Activated B cell treated with CpG ODN at 0.5 μM for 24 hours (primary cell): ENCODE measurements at regions of chr5 and their contacts with region 1.

Region 1: DNA sequence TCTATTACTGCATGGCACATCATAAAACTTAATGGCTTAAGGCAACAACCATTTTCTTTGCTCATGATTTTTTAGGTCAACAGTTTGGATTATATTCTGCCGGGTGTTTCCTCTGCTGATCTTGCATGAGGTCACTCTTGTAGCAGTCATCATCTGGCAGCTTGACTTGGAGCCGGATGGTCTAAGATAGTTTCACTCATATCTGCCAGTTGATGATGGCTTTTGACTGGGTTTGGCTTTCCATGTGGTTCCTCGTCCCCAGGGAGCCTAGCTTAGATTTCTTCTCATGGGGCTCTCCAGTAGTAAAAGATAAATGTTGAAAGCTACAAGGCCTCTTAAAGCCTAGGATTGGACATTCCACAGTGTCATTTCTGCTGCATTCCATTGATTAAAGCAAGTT is 27.4 kb downstream of the LNPEP start:
- DNase-seq: no peak
- ATAC-seq: peak; percentile 59
- H3K4me3 Mint-ChIP-seq: no peak overlapping the region
- H3K27ac Mint-ChIP-seq: peak overlapping the region; percentile 90
- H3K4me1 Mint-ChIP-seq: peaks cover 84% of the 10 kb centered on the region
- H3K27me3 Mint-ChIP-seq: no peaks in the 10 kb centered on the region
- CTCF ChIP-seq: no peak

Region 2: DNA sequence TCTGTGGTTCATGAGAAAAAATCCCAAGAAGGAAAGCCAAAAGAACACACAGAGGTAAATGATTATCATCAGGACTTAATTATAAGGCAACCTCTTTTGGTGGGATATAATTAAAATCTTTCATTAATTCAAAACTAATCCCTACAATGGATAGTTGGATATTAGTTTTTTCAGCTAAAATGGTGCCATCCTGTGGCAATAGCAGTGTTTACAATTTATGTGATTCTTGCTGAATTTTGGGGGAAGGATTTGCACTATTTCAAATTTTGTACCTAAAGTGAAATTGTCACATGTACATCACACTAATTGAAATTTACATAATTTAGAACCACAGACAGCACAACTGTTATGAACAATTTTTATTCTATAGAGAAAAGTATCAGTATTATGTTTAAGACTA is 234.1 kb before region 1 on chr5:
- CTCF ChIA-PET with region 1: no interaction called
- POLR2A ChIA-PET with region 1: no interaction called
- intact Hi-C with region 1: no loop called
- DNase-seq: no peak
- ATAC-seq: no peak
- H3K4me3 Mint-ChIP-seq: no peak overlapping the region
- H3K27ac Mint-ChIP-seq: no peak overlapping the region
- H3K4me1 Mint-ChIP-seq: peaks cover 3% of the 10 kb centered on the region
- H3K27me3 Mint-ChIP-seq: no peaks in the 10 kb centered on the region
- CTCF ChIP-seq: no peak

Region 3: DNA sequence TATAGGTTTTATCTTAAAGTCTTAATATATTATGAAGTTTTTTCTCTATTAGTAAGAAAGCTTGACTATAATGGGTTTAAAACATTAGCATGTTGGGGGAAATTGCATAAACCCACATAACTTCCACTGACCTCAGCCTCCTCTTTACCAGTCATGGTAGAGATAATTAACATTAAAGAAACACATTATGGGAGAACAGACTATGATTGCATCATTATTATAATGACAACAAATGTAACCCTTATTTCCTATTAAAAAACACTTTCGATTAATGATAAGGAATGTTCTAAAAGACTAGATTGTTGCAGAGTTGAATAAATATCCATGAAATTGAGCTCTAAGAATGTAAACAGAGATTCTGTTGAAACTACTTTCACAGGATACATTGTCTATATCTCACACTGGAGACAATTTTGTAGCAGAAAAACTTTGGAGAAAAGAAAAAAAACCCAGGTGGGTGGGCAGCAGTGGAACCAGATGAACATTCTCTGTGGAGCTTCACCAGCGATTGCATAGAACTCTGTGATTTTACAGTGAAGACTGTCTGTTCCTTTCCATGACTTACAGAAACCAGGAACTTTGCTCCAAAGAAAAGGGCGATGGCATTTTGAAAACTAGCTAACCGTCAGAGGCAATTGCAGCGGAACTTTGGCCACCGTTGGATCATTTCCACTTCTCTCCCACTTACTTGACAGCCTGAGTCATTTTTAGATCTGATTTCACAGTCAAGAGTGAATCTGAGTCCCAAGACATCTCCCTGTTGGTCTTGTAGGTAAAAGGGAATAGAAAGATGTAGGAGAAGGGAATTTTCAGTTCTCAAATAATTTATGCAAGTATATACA is 108.0 kb before region 1 on chr5:
- CTCF ChIA-PET with region 1: no interaction called
- POLR2A ChIA-PET with region 1: no interaction called
- intact Hi-C with region 1: no loop called
- DNase-seq: no peak
- ATAC-seq: no peak
- H3K4me3 Mint-ChIP-seq: no peak overlapping the region
- H3K27ac Mint-ChIP-seq: no peak overlapping the region
- H3K4me1 Mint-ChIP-seq: no peaks in the 10 kb centered on the region
- H3K27me3 Mint-ChIP-seq: no peaks in the 10 kb centered on the region
- CTCF ChIP-seq: no peak

Region 4: GRCh38 chr5:96973532-96974401 is 10.5 kb after region 1 on chr5:
- CTCF ChIA-PET with region 1: no interaction called
- POLR2A ChIA-PET with region 1: interaction called, 3 read pairs
- intact Hi-C with region 1: loop called (anchors 1 kb)
- DNase-seq: no peak
- ATAC-seq: peak; percentile 40
- H3K4me3 Mint-ChIP-seq: peak overlapping the region; percentile 29
- H3K27ac Mint-ChIP-seq: peak overlapping the region; percentile 7
- H3K4me1 Mint-ChIP-seq: peaks cover 72% of the 10 kb centered on the region
- H3K27me3 Mint-ChIP-seq: no peaks in the 10 kb centered on the region
- CTCF ChIP-seq: no peak